Left cardiac atrium (tissue), 4 donors: ENCODE measurements at regions of chr9 and their contacts with region 1.

Region 1: GRCh38 chr9:113401027-113401792 is at the start of gene ALAD:
- DNase-seq: peak; percentile 99
- ATAC-seq: peak; percentile 100
- total RNA-seq, gene ALAD: 32.8 to 39.1 TPM

Region 2: GRCh38 chr9:111668026-111668573 is 1733.1 kb before region 1 on chr9:
- intact Hi-C with region 1: no loop called
- DNase-seq: no peak
- ATAC-seq: no peak

Region 3: DNA sequence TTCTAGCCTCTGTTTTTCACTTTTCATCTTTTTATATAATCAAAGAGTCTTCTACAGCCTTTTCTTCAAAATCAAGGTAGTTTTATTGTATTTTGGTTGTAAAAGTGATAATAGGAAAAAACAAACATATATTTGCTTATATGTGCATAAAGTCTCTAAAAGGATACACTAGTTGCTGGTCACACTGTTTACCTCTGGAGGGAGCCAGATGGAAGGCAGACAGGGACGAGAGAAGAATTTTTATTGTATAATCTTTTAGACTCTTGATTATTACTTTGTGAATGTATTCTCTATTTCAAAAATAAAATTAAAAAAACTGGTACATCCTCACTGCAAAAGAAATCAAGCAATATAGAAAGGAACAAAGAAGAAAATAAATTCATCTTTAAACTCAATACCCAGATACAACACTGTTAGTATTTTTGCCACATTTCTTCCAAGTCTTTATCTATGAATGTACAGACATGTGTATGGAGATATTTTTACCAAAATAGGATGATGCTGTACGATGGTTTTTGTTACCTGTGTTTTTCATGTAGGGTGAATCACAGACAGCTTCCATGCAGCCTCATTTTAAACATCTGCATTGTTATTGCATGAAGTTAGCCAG is 91.9 kb before region 1 on chr9:
- intact Hi-C with region 1: loop called in 1 of 2 experiments (anchors 2 kb)
- DNase-seq: no peak
- ATAC-seq: peak in 1 of 2 donors; percentile 63